ENCODE measurements at regions of chr2 and their contacts with region 1.

Region 1: DNA sequence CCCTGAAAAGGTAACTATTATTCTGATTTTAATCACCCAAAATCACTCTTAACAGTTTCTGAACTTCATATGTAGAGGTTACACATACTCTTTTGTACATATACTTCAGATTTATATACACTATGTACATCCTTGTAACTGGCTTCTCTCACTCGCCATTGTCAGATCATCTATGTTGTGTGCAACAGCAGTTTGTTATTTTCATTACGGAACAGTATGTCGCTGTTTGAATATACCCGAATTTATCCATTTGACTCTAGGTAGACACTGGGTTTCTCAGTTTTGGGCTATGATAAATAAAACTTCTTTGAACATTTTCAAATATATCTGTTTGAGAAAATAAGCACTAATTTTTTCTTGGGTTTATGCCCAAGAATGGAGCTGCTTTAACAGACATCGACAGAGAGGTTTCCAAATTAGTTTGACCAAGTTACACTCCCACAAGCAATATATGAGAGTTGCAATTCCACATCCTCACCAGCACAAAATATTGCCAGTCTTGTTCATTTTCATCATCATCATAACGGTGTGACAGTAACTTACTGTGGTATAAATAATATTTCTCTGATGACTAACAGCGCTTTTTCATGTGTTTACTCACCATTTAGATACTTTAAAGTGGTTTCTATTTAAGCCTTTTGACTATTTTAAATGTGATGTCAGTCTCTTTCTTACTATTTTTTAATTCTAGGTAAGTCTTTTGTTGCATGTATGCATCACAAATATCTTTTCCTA is 80.9 kb downstream of the SMC6 start:
- DNase-seq: no peak
- H3K4me3 ChIP-seq: no peak overlapping the region
- CTCF ChIP-seq: no peak

Region 2: DNA sequence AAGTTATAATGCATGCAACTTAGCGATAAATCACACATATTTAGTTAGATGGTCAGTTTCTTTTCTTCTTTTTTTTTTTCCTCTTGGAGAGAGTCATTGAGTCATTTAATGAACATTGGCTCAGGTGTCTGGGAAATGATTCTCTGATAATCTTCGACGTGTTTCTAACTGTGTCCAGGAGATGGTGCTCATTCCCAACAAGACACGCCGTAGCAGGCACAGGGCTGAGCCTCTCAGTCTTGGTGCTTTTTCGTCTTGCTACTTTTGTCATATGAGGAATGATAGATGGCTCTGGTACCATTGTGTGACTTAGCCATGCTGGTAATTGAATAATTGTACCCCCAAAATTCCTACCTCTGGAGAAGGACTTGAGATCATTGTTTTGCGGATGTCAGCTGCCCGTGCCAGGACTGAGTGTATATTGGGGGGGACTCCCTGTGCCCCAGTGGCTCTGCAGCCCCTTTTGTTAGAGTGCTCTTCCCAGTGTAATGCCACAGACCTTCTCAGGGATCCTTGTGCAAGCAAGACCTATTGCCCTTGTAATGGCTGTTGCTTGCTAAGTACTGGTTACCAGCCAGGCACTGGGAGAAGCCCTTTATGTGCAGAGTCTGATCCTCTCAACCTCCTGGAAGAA is 899.6 kb before region 1 on chr2:
- CTCF ChIA-PET with region 1: interaction called, 41 read pairs
- POLR2A ChIA-PET with region 1: no interaction called
- DNase-seq: no peak
- H3K4me3 ChIP-seq: no peak overlapping the region
- CTCF ChIP-seq: peak; percentile 51

Region 3: DNA sequence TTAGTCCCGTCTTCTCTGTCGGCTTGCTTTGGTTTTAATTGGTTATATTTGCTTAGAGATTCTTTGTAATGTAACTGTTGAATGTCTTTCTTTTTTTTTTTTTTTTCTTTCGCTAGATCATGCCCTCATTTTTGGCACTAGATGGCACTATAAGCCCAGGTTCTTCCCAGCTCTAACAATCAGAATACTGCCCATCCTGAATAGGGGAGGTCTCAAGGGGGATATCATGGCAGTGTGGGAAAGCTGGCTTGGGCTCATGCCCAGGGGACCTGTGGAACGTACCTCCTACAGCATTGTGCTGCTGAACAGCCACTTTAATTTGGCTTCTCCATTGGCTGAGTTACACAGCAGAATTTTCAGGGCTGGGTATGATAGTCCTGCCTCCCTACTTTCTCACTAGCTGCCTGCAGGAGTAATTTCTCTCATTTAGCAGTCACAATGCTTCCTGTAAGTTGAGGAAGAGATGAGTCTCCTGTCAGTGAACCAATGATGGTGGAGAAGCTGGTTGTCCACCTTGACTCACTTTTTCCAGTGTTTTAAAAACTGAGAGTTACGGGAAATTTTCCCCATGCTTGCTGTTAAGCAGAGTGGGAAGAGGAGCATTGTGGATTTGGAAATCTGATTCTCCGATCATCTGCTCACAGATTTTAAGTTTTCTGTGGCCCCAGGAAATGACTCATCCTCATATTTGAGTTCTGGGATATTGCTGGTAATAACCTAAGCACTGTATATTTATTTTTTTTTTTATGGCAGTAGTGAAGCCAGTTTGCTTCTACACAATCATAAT is 201.7 kb before region 1 on chr2:
- CTCF ChIA-PET with region 1: interaction called, 39 read pairs
- POLR2A ChIA-PET with region 1: no interaction called
- DNase-seq: no peak
- H3K4me3 ChIP-seq: no peak overlapping the region
- CTCF ChIP-seq: no peak

Region 4: GRCh38 chr2:17646081-17646554 is 26.6 kb before region 1 on chr2:
- CTCF ChIA-PET with region 1: interaction called, 147 read pairs
- POLR2A ChIA-PET with region 1: no interaction called
- DNase-seq: peak; percentile 41
- H3K4me3 ChIP-seq: no peak overlapping the region
- CTCF ChIP-seq: peak; percentile 71

Region 5: GRCh38 chr2:17658251-17658843 is 14.4 kb before region 1 on chr2:
- CTCF ChIA-PET with region 1: interaction called, 51 read pairs
- POLR2A ChIA-PET with region 1: no interaction called
- DNase-seq: peak; percentile 57
- H3K4me3 ChIP-seq: no peak overlapping the region
- CTCF ChIP-seq: no peak

Measured in AG04449 (cell line).